Naive thymus-derived CD4-positive, alpha-beta T cell (primary cell): ENCODE measurements at regions of chr13 and their contacts with region 1.

Region 1: DNA sequence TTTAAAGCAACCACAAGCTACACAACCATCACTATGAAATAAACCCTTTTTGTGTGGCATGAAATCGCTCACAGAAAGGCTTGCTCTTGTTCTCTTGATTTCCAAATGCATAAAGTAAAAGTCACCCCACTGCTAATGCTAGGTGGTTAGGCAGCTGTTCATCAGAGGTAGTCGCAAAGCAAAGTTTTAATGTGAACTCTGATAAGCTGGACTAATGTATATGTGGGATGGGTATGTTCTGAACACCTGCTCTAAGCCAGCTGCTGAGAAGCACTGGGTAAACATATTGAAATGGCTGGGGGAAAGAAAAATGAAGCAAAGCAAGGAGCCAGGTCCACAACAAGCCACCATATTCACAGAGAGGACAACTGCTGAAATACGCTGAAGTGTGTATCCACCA is 142.3 kb downstream of the KLF12 start:
- DNase-seq: no peak
- ATAC-seq: no peak
- H3K4me3 ChIP-seq: no peak overlapping the region
- H3K4me3 Mint-ChIP-seq: no peak overlapping the region
- H3K27ac ChIP-seq: no peak overlapping the region
- H3K27ac Mint-ChIP-seq: peak overlapping the region in 7 of 9 donors; percentile 1 to 72 (median 43)
- H3K4me1 ChIP-seq: peaks cover 5 to 24% of the 10 kb centered on the region in 2 donors
- H3K4me1 Mint-ChIP-seq: peaks cover 26 to 86% (median 74%) of the 10 kb centered on the region in 7 donors
- H3K27me3 ChIP-seq: no peaks in the 10 kb centered on the region
- H3K27me3 Mint-ChIP-seq: no peaks in the 10 kb centered on the region

Region 2: GRCh38 chr13:73335221-73335620 is 656.7 kb before region 1 on chr13:
- CTCF ChIA-PET with region 1: no interaction called
- POLR2A ChIA-PET with region 1: no interaction called
- intact Hi-C with region 1: no loop called
- DNase-seq: no peak
- ATAC-seq: peak; percentile 75
- H3K4me3 ChIP-seq: no peak overlapping the region
- H3K4me3 Mint-ChIP-seq: no peak overlapping the region
- H3K27ac ChIP-seq: no peak overlapping the region
- H3K27ac Mint-ChIP-seq: no peak overlapping the region
- H3K4me1 ChIP-seq: no peaks in the 10 kb centered on the region
- H3K4me1 Mint-ChIP-seq: peaks cover 0 to 4% (median 0%) of the 10 kb centered on the region in 7 donors
- H3K27me3 ChIP-seq: no peaks in the 10 kb centered on the region
- H3K27me3 Mint-ChIP-seq: peaks cover 0 to 4% (median 0%) of the 10 kb centered on the region in 5 donors

Region 3: GRCh38 chr13:74005320-74006157 is 13.7 kb after region 1 on chr13:
- CTCF ChIA-PET with region 1: interaction called, 3 read pairs
- POLR2A ChIA-PET with region 1: no interaction called
- intact Hi-C with region 1: loop called in 1 of 2 experiments (anchors 2 kb)
- DNase-seq: peak in 2 of 9 donors; percentile 22 to 25
- ATAC-seq: peak; percentile 55
- H3K4me3 ChIP-seq: no peak overlapping the region
- H3K4me3 Mint-ChIP-seq: peak overlapping the region in 3 of 10 donors; percentile 2 to 37 (median 20)
- H3K27ac ChIP-seq: no peak overlapping the region
- H3K27ac Mint-ChIP-seq: peak overlapping the region in 7 of 9 donors; percentile 0 to 71 (median 5)
- H3K4me1 ChIP-seq: peaks cover 7 to 10% of the 10 kb centered on the region in 2 donors
- H3K4me1 Mint-ChIP-seq: peaks cover 16 to 81% (median 66%) of the 10 kb centered on the region in 7 donors
- H3K27me3 ChIP-seq: no peaks in the 10 kb centered on the region
- H3K27me3 Mint-ChIP-seq: no peaks in the 10 kb centered on the region